ENCODE measurements at regions of chr3 and their contacts with region 1.

Region 1: GRCh38 chr3:50337191-50337841 is 3.3 kb downstream of the RASSF1 start:
- DNase-seq: peak; percentile 99
- H3K4me3 Mint-ChIP-seq: peak overlapping the region; percentile 97
- H3K27ac Mint-ChIP-seq: peak overlapping the region; percentile 92
- H3K4me1 Mint-ChIP-seq: peaks cover 57% of the 10 kb centered on the region
- H3K27me3 Mint-ChIP-seq: no peaks in the 10 kb centered on the region

Region 2: DNA sequence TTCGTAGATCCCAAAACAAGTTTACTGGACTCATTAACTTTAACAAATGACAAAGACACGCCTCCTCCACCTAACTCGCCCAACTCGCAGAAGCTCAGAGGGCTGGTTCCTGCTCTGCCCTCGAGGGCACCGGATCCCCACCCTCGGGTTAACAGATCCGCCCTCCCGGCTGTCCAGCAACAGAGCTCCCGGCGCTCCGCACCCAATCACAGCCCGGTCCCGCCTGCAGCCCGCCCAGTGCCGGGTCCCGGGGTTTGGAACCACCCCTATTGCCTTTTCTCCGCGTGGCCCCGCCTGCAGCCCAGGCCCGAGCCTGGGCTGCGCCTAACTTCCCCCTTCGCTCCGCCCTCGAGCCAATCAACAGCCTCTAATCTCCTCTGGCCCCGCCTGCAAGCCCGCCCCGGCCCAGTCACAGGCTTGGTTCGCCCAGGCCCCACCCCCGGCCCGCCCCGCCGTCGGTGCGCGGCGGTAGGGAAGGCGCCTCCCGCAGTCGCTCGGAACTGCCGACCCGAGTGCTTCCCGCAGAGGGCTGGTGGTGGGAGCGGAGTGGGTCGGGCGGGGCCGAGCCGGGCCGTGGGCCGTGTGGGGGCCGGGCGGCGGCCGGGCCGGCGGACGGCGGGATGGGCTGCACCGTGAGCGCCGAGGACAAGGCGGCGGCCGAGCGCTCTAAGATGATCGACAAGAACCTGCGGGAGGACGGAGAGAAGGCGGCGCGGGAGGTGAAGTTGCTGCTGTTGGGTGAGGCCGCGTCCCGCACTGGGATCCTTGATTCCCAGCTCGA is 101.4 kb before region 1 on chr3 and contains the start of gene GNAI2:
- CTCF ChIA-PET with region 1: no interaction called
- POLR2A ChIA-PET with region 1: interaction called, 5 read pairs
- intact Hi-C with region 1: loop called (anchors 2 kb)
- DNase-seq: peak; percentile 100
- H3K4me3 Mint-ChIP-seq: peak within 1 kb of the TSS; percentile 91
- H3K27ac Mint-ChIP-seq: peak within 1 kb of the TSS; percentile 94
- H3K4me1 Mint-ChIP-seq: peaks cover 31% of the 10 kb centered on the region
- H3K27me3 Mint-ChIP-seq: no peaks in the 10 kb centered on the region
- total RNA-seq, gene GNAI2: 346 to 349 TPM

Region 3: DNA sequence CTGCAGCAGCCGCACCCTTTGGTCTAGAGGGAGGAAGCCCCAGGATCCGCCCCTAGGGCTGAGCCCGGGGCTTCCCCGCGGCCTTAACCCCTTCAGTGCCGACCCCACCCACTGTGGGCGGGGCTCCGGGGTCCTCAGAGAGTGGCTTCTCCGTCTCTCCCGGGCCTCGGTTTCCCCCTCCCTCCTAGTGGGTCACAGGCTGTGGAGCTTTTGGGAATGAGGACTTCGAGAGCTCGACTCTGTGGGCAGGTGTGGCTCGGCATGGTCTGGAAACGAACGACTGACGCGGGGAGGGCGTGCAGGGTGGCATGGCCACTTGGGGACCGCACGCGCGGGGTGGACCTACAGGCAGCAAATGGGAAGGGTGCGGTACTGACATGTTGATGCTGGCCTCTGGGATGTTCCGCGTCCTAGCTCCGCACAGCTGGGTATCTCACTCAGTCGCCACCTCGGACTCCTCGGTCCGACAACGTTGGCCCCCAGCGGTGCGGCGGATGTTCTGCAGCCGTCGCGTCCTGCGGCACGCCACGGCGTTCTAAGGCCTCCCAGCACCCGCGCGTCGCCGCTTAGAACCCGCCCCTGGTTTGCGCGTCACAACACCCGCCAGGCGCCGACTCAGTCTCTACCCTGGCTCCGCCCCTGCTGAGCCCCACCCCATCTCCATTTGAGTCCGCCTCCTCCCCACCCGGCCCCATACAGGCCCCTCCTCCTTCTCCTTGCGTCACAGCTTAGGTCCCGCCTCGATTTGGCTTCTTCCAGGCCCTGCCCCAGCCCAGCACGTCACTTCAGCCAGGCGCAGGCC is 38.3 kb before region 1 on chr3 and contains the starts of genes HYAL3 and NAA80:
- CTCF ChIA-PET with region 1: interaction called, 12 read pairs
- POLR2A ChIA-PET with region 1: interaction called, 34 read pairs
- intact Hi-C with region 1: loop called (anchors 1 kb)
- DNase-seq: peak; percentile 100
- H3K4me3 Mint-ChIP-seq: peak within 1 kb of the TSS; percentile 97
- H3K27ac Mint-ChIP-seq: peak within 1 kb of the TSS; percentile 95
- H3K4me1 Mint-ChIP-seq: peaks cover 24% of the 10 kb centered on the region
- H3K27me3 Mint-ChIP-seq: no peaks in the 10 kb centered on the region
- total RNA-seq, gene HYAL3: 2.5 to 4.0 TPM
- total RNA-seq, gene NAA80: 18.8 to 19.6 TPM

Region 4: DNA sequence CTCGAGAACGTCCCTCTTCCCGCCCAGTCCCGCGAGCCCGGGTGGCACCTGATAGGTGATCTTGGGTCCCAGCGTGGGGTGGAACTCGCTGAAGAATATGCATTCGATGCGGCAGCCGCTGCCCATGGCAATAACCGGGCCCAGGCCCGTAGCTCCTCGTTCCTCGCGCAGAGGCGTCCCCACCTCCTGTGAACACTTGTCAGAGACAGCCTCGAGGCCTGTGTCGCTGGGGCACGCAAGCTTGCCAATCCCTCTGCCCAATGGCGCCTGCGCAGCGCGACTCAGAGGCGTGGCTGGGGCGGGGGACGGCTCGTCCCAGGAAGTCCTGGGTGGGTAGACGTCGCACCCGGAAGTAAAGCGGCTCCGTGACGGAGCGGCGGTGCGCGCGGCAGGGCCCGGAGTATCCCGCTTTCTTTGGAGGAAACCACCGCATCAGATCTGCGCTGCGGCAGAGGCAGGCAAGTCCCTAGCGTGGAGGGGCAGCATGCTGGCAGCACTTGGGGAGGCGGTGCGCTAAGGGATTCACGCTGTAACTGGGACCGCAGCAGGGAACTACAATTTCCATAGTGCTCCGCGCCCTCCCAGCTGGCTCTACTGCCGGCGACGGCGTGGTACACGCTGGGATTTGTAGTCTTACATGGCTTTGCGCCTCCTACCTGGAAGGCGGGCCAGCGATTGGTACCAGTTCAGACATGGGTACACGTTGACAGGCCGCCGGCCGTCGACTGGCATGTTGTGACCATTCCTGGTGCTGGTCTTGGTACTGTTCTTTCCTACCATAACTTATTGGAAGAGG is 13.4 kb after region 1 on chr3 and contains the starts of genes CYB561D2 and NPRL2:
- CTCF ChIA-PET with region 1: interaction called, 39 read pairs
- POLR2A ChIA-PET with region 1: interaction called, 93 read pairs
- intact Hi-C with region 1: loop called (anchors 2 kb)
- DNase-seq: peak; percentile 100
- H3K4me3 Mint-ChIP-seq: peak within 1 kb of the TSS; percentile 94
- H3K27ac Mint-ChIP-seq: peak within 1 kb of the TSS; percentile 97
- H3K4me1 Mint-ChIP-seq: peaks cover 62% of the 10 kb centered on the region
- H3K27me3 Mint-ChIP-seq: no peaks in the 10 kb centered on the region
- total RNA-seq, gene CYB561D2: 17.8 to 20.1 TPM
- total RNA-seq, gene NPRL2: 33.2 to 35.8 TPM

Region 5: DNA sequence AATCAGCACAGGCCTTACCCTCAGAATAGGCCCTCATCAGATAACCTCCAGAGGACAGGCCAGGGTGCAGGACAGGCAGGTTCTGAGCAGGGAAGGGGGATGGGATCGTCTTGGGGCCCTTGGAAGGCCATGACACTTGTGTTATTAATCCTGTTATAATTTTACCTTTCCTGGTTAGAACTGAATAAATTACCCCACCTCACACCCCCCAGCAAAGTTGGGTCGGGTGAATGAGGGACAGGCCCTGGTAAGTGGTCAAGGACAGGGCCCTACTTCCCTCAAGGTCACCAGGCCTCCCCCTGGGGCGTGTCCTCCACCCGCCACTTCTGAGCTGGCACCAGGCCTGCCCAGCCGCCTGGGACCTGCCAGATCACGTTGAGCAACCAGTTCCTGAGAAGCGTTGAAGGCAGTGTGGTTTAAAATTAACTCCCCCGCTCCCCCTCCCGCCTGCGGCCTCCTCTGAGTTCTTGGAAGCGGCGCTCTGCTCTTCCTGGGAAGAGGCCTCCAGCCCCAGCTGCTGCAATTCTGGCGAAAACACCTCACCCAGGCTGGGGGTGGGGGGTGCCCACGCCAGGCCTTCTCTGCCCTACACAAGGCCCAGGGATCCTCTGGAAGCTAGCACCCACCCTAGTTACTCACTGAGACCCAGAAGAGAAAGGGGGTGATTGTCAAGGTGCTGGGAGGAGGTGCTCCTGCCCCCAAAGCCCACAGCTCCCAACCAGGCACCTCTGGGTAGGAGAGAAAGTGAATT is 263.7 kb after region 1 on chr3:
- CTCF ChIA-PET with region 1: no interaction called
- POLR2A ChIA-PET with region 1: interaction called, 3 read pairs
- intact Hi-C with region 1: loop called (anchors 5 kb)
- DNase-seq: peak; percentile 98
- H3K4me3 Mint-ChIP-seq: peak overlapping the region; percentile 98
- H3K27ac Mint-ChIP-seq: peak overlapping the region; percentile 100
- H3K4me1 Mint-ChIP-seq: peaks cover 81% of the 10 kb centered on the region
- H3K27me3 Mint-ChIP-seq: no peaks in the 10 kb centered on the region

Measured in activated CD4-positive, alpha-beta memory T cell treated with anti-CD3 and anti-CD28 coated beads for 36 hours (primary cell).